Left colon (tissue), 2 donors: ENCODE measurements at regions of chr20 and their contacts with region 1.

Region 1: DNA sequence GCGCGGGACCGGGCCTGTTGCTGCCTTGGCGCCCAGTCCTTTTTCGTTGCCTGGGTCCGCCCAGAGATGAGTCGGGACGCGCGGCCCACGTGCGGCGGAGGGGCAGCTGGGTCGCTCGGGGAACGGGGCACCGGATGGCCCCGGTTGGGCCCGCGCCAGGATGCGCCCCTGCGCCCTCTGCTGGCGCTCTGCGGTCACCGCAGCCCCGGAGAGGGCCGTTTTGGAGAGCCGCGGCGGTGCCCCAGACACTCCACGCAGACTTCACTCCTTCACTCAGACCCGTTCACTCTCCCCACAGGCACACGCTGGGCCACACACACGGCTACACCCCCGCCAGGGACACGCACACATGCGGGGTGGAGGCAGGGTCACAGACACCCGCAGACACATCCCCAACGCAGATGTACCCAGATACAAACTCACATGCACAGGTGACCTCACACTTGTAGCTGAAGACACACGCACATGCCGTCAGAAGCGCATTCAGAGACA is 38.8 kb downstream of the SRC start:
- DNase-seq: peak; percentile 34 to 70
- ATAC-seq: peak; percentile 52

Region 2: GRCh38 chr20:37276494-37277252 is 108.1 kb before region 1 on chr20:
- intact Hi-C with region 1: loop called (anchors 10 kb)
- DNase-seq: peak; percentile 52 to 60
- ATAC-seq: peak; percentile 93

Region 3: GRCh38 chr20:37282556-37282955 is 102.2 kb before region 1 on chr20:
- intact Hi-C with region 1: loop called (anchors 10 kb)
- DNase-seq: no peak
- ATAC-seq: peak; percentile 35

Region 4: DNA sequence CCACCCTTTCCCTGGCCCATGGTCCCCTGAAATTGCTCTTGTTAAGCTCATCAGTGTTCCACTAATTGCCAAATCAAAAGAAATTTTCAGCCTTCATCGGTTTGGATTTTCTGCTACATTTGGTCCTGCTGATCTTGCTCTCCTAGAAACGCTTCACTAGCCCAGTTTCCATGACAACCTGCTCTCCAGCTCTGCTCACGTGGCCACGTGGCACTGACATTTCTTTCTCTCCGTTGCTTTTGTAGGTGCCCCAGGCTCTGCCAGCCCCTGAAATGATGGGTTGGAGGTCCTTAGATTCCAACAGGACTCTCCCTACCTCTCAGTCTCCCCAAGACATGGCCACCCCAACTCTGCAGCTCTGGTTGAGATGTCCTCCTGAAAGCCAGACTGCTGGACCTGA is 90.5 kb after region 1 on chr20:
- intact Hi-C with region 1: no loop called
- DNase-seq: no peak
- ATAC-seq: no peak

Region 5: DNA sequence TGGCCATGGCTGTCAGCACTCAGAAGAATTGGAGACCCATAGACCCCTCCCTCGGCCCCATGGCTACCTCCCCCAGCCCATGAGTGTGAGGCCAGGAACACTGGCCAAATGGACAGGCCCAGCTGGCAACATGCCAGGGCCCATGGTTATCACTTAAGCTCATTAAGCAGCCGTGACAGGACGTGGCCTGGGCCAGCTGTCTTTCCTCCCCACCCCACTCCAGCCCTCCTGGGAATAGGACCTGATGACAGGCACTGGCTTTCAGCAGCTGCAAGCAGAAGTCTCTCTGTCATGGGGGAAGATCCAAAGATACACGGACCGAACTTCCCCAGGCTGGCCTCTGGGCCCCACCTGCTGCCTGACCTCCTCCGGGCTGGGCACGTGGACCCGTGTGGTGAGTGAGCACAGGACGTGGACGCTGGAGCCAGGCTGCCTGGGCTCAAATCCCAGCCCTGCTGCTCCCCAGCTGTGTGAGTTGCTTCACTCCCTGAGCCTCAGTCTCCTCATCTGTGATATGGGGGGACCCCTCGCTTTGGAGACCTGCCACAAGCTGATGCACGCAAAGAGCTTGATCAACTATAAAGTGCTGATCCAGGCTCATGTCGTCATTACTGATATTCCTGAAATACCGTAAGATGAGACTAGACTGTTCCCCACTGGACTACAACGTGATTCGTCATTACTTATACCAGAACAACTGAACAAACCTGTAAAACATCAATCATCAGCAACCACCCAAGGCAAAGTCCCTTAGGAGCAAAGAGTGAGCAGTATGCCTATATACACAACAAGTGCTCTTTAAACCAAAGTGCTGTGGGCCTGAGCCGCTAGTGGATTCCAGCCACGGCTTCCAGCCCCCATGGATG is 496.2 kb after region 1 on chr20:
- intact Hi-C with region 1: no loop called
- DNase-seq: peak in 1 of 2 donors; percentile 29
- ATAC-seq: peak; percentile 85